Endothelial cell of umbilical vein (primary cell): ENCODE measurements at regions of chr5 and their contacts with region 1.

Region 1: DNA sequence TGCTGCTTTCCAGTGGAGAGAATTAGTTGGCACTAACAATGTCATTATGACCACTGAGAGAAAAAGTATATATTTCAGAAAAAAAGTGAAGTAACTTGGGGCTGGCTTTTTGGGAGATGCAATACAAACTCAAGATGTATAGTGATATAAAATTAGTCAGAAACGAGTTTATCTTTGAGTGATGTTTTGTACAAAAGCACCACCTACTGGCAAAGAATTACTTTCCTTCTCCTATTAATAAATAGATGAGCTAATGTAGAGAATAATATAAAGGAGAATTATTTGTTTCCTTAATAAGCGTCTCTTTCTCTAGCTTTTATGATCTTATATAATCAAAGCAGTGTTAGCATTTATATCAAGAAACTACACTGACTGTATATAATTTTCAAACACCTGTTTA is 158.8 kb downstream of the MEF2C start:
- DNase-seq: peak; percentile 32
- H3K4me3 ChIP-seq: no peak overlapping the region
- H3K27ac ChIP-seq: no peak overlapping the region
- H3K4me1 ChIP-seq: no peaks in the 10 kb centered on the region
- H3K27me3 ChIP-seq: no peaks in the 10 kb centered on the region
- CTCF ChIP-seq: no peak
- POLR2A ChIP-seq: no peak

Region 2: GRCh38 chr5:88702328-88702727 is 21.9 kb before region 1 on chr5:
- CTCF ChIA-PET with region 1: interaction called, 14 read pairs
- POLR2A ChIA-PET with region 1: no interaction called
- dilution Hi-C with region 1: no loop called
- intact Hi-C with region 1: no loop called
- DNase-seq: no peak
- H3K4me3 ChIP-seq: no peak overlapping the region
- H3K27ac ChIP-seq: no peak overlapping the region
- H3K4me1 ChIP-seq: no peaks in the 10 kb centered on the region
- H3K27me3 ChIP-seq: peaks cover 19 to 55% of the 10 kb centered on the region in 2 experiments
- CTCF ChIP-seq: no peak
- POLR2A ChIP-seq: no peak

Region 3: GRCh38 chr5:88707216-88707965 is 16.8 kb before region 1 on chr5:
- CTCF ChIA-PET with region 1: interaction called, 14 read pairs
- POLR2A ChIA-PET with region 1: no interaction called
- dilution Hi-C with region 1: no loop called
- intact Hi-C with region 1: no loop called
- DNase-seq: no peak
- H3K4me3 ChIP-seq: no peak overlapping the region
- H3K27ac ChIP-seq: no peak overlapping the region
- H3K4me1 ChIP-seq: no peaks in the 10 kb centered on the region
- H3K27me3 ChIP-seq: peaks cover 10 to 12% of the 10 kb centered on the region in 2 experiments
- CTCF ChIP-seq: no peak
- POLR2A ChIP-seq: no peak

Region 4: GRCh38 chr5:88713818-88714217 is 10.4 kb before region 1 on chr5:
- CTCF ChIA-PET with region 1: interaction called, 20 read pairs
- POLR2A ChIA-PET with region 1: no interaction called
- dilution Hi-C with region 1: no loop called
- intact Hi-C with region 1: no loop called
- DNase-seq: no peak
- H3K4me3 ChIP-seq: no peak overlapping the region
- H3K27ac ChIP-seq: no peak overlapping the region
- H3K4me1 ChIP-seq: no peaks in the 10 kb centered on the region
- H3K27me3 ChIP-seq: peaks cover 0 to 2% of the 10 kb centered on the region in 2 experiments
- CTCF ChIP-seq: no peak
- POLR2A ChIP-seq: no peak

Region 5: DNA sequence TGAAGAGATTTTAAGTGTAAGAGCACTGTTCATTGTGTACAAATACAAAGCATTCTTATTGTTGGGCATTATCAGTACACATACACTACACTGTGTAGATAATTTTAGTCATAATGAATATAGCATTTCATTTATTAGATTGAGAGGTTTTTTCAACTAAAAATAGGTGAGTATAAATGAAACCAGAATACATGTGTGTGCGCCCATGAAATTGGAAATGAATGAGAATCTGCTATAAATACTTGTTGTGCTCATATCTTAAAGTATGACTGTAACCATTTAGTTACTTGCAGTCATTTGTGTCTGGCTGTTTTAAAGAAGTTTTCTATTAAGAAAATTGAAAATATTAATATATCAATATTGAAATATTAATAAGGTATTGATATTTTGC is 347.7 kb after region 1 on chr5:
- CTCF ChIA-PET with region 1: interaction called, 11 read pairs
- POLR2A ChIA-PET with region 1: no interaction called
- dilution Hi-C with region 1: no loop called
- intact Hi-C with region 1: no loop called
- DNase-seq: no peak
- H3K4me3 ChIP-seq: no peak overlapping the region
- H3K27ac ChIP-seq: no peak overlapping the region
- H3K4me1 ChIP-seq: no peaks in the 10 kb centered on the region
- H3K27me3 ChIP-seq: no peaks in the 10 kb centered on the region
- CTCF ChIP-seq: no peak
- POLR2A ChIP-seq: no peak

Region 6: GRCh38 chr5:89729623-89730301 is 1005.6 kb after region 1 on chr5:
- CTCF ChIA-PET with region 1: interaction called, 52 read pairs
- POLR2A ChIA-PET with region 1: no interaction called
- dilution Hi-C with region 1: no loop called
- intact Hi-C with region 1: loop called (anchors 5 kb)
- DNase-seq: peak; percentile 3
- H3K4me3 ChIP-seq: no peak overlapping the region
- H3K27ac ChIP-seq: no peak overlapping the region
- H3K4me1 ChIP-seq: no peaks in the 10 kb centered on the region
- H3K27me3 ChIP-seq: peaks cover 2 to 3% of the 10 kb centered on the region in 2 experiments
- CTCF ChIP-seq: no peak
- POLR2A ChIP-seq: no peak